ENCODE measurements at regions of chr2 and their contacts with region 1.

Region 1: DNA sequence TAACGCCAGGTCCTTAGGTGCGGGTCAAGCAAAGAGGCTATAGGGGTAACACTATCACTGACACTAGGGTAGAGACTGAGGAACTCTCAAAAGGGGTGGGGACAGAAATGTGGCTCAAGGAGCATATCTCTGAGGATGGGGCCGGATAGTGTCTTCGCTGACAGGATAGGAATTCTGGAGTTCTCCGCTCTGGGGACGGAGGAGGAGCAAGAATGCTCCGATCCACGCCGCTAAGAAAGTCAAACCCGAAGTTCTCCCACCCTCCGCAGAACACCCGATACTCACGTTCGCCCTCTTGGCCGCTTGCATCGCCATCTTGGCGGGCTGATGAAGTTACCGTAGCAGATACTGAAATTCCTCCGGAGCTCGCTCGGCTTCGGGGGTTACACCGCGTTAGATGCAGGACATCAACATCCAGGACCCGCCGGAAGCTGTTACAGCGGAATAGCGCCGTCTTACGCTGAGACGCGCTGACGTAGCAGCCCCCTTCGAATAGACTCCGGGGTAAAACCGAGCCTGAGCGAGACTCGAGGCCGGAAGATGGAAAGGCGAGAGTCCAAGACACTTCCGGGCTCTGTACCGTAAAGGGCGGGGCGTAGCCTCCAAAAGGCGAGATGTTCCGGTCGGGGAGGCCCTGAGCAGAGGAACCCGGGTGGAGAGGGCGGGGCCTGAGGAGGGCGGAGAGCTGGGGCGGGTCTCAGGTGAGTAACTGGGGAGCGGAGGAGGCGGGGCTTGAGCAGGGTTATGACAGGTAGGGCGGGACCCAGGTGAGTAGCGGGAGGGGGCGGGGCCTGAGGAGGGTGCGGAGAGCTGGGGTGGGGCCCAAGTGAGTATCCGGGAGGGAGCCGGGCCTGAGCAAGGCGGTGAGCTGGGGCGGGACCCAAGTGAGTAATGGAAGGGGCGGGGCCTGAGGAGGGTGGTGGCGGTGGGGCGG is at the start of gene SF3B6:
- DNase-seq: peak; percentile 93

Region 2: DNA sequence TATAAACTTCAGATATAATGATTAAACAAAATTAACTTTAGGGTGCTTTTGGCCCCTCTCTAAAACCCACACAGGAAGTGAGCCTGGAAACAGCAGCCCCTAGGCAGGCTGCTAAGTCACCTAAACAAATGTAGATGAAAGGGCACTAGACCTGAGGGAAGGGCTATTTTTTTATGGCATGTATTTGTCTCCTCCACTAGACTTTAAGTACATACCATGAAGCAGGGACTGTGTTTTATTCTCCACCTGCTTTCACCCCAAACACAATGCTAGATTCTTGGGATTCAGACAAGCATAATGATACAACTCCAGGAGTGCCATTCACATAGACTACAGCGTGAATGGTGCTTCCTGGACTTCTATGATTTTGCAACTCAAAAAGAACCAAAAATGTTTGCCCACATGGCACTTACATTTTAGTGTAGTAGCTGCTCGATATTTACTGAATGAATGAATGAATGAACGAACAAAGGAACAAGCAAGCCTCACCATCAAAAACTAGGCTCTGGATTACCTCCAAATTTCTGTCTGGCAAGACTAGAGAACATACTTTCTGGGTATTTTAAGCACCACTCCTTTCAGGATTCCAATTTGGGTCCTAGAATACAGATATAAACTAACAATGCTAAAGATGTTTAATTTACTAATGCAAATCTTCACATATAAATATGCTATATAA is 159.3 kb before region 1 on chr2:
- CTCF ChIA-PET with region 1: no interaction called
- POLR2A ChIA-PET with region 1: no interaction called
- DNase-seq: no peak

Region 3: GRCh38 chr2:24065341-24065740 is 10.8 kb before region 1 on chr2:
- CTCF ChIA-PET with region 1: no interaction called
- POLR2A ChIA-PET with region 1: interaction called, 16 read pairs
- DNase-seq: no peak